Endothelial cell of umbilical vein (primary cell): ENCODE measurements at regions of chr3 and their contacts with region 1.

Region 1: DNA sequence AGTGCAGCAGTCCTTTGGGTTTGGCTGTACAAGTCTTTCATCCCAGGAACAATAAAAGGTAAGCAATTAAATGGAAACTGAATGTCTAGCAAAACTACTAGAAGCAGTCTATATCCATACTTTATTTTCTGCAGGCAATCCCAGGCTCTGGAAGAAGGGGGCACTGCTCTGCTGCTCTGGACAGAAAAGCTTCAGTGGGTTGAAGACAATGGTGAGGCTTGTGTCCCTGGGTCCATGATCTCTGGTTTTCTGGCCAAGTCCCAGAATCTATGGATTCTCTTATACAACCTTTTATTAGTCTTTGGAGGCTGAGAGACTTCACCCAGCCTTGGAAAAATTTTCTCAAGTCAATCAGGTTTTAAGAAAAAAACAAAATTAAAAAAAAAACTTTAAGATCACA is 35.6 kb downstream of the SCAP start:
- DNase-seq: peak; percentile 23
- H3K4me3 ChIP-seq: no peak overlapping the region
- H3K27ac ChIP-seq: no peak overlapping the region
- H3K4me1 ChIP-seq: no peaks in the 10 kb centered on the region
- H3K27me3 ChIP-seq: no peaks in the 10 kb centered on the region
- CTCF ChIP-seq: peak in 1 of 2 donors; percentile 37
- POLR2A ChIP-seq: no peak

Region 2: GRCh38 chr3:47047673-47048072 is 392.5 kb before region 1 on chr3:
- CTCF ChIA-PET with region 1: no interaction called
- POLR2A ChIA-PET with region 1: no interaction called
- dilution Hi-C with region 1: no loop called
- intact Hi-C with region 1: no loop called
- DNase-seq: peak; percentile 27
- H3K4me3 ChIP-seq: no peak overlapping the region
- H3K27ac ChIP-seq: no peak overlapping the region
- H3K4me1 ChIP-seq: no peaks in the 10 kb centered on the region
- H3K27me3 ChIP-seq: no peaks in the 10 kb centered on the region
- CTCF ChIP-seq: no peak
- POLR2A ChIP-seq: no peak

Region 3: GRCh38 chr3:47394140-47394870 is 45.8 kb before region 1 on chr3:
- CTCF ChIA-PET with region 1: no interaction called
- POLR2A ChIA-PET with region 1: no interaction called
- dilution Hi-C with region 1: no loop called
- intact Hi-C with region 1: loop called (anchors 2 kb)
- DNase-seq: peak; percentile 83
- H3K4me3 ChIP-seq: no peak overlapping the region
- H3K27ac ChIP-seq: peak overlapping the region; percentile 67
- H3K4me1 ChIP-seq: peaks cover 24% of the 10 kb centered on the region
- H3K27me3 ChIP-seq: no peaks in the 10 kb centered on the region
- CTCF ChIP-seq: no peak
- POLR2A ChIP-seq: no peak

Region 4: GRCh38 chr3:47475570-47476329 is 35.6 kb after region 1 on chr3 and contains the start of gene SCAP:
- CTCF ChIA-PET with region 1: interaction called, 6 read pairs
- POLR2A ChIA-PET with region 1: no interaction called
- dilution Hi-C with region 1: no loop called
- intact Hi-C with region 1: loop called (anchors 1 kb)
- DNase-seq: peak; percentile 85
- H3K4me3 ChIP-seq: peak within 1 kb of the TSS; percentile 60 to 83 (median 82)
- H3K27ac ChIP-seq: no peak within 1 kb of the TSS
- H3K4me1 ChIP-seq: no peaks in the 10 kb centered on the region
- H3K27me3 ChIP-seq: no peaks in the 10 kb centered on the region
- CTCF ChIP-seq: peak; percentile 84 to 95
- POLR2A ChIP-seq: peak; percentile 15
- total RNA-seq, gene SCAP: 53.6 and 59.0 TPM in 2 replicates

Region 5: DNA sequence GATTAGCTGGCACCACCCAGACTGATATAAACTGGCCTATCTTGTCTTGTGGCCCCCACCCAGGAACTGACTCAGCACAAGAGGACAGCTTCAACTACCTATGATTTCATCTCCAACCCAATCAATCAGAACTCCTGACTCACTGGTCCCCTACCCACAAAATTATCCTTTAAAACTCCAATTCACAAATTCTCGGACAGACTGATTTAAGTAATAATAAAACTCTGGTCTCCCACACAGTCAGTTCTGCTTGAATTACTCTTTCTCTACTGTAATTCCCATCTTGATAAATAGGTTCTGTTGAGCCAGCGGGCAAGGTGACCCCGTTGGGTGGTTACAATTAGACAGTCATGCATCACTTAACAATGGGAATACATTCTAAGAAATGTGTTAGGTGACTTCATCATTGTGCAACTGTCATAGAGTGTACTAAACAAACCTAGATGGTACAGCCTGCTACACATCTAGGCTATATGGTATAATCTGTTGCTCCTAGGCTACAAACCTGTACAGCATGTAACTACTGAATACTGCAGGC is 624.2 kb after region 1 on chr3:
- CTCF ChIA-PET with region 1: no interaction called
- POLR2A ChIA-PET with region 1: no interaction called
- dilution Hi-C with region 1: no loop called
- intact Hi-C with region 1: no loop called
- DNase-seq: no peak
- H3K4me3 ChIP-seq: no peak overlapping the region
- H3K27ac ChIP-seq: no peak overlapping the region
- H3K4me1 ChIP-seq: peaks cover 2% of the 10 kb centered on the region
- H3K27me3 ChIP-seq: no peaks in the 10 kb centered on the region
- CTCF ChIP-seq: no peak
- POLR2A ChIP-seq: no peak